Dendritic cell treated with granulocyte-macrophage colony-stimulating factor and Interleukin-4, amounts not matched to agents 40 ng/mL and 50 ng/mL, for 4 days (primary cell): ENCODE measurements at regions of chr10 and their contacts with region 1.

Region 1: DNA sequence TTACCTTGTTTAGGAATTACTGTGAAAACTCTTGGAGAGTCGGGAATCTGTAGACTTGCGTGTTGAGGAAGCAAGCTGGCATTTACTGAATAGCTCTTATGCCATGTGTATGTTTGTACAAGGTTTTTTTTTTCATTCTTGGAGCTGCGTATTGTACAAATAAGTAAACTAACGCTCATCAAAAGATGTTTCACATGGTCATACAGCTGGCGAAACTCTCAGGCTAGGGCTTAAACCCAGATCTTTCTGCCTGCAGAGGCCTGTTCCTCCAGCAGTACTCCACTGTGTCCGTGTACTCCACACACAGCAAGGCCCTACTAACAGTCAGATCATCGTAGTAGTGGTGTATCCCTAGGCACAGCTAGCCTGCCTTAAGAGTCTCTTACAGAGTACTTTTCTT is 7.4 kb downstream of the EDRF1 start:
- H3K4me3 Mint-ChIP-seq: no peak overlapping the region
- H3K27ac Mint-ChIP-seq: no peak overlapping the region
- H3K4me1 Mint-ChIP-seq: peaks cover 5% of the 10 kb centered on the region
- H3K27me3 Mint-ChIP-seq: no peaks in the 10 kb centered on the region

Region 2: DNA sequence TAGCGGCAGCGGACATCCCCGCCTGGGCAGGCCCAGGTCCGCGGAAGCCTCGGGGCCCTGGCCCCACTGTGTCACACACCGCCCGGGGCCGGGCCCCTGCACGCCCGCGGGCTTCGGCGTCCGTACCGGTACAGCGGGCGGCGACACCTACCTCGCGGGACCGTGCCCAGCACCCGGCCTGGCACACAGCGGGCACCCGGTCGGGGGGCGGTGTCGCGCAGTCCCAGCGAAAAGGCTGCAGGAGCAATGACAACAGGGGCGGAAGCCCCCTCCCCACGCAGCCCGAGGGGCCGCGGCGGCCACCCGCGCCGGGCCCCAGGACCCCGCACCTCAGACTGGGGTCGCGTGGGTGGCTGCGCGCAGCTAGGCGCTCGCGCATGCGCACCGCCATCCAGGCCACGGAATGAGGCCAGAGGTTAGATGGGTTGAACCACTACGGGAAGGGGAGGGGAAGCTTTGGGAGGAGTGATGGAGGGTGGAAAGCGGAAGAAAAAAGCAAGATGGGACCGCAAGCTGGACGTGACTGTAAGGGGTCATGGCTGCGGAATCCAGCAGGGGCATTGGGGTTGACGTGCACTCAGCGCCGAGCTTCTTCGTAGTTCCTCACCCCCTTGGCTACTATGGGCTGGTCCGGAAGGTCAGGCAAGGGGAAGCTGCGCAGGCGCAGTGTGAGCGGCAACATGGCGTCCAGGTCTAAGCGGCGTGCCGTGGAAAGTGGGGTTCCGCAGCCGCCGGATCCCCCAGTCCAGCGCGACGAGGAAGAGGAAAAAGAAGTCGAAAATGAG is 96.2 kb after region 1 on chr10 and contains the starts of genes BCCIP and UROS:
- intact Hi-C with region 1: loop called (anchors 5 kb)
- H3K4me3 Mint-ChIP-seq: no peak within 1 kb of the TSS
- H3K27ac Mint-ChIP-seq: no peak within 1 kb of the TSS
- H3K4me1 Mint-ChIP-seq: peaks cover 23% of the 10 kb centered on the region
- H3K27me3 Mint-ChIP-seq: no peaks in the 10 kb centered on the region